ENCODE measurements at regions of chr14 and their contacts with region 1.

Region 1: GRCh38 chr14:22556990-22557623 is 31.9 kb downstream of the DAD1 start:
- DNase-seq: peak; percentile 89 to 95 (median 92)
- ATAC-seq: peak; percentile 85 to 87
- H3K4me3 ChIP-seq: peak overlapping the region; percentile 26
- H3K27ac ChIP-seq: no peak overlapping the region
- H3K4me1 ChIP-seq: peaks cover 2% of the 10 kb centered on the region
- H3K27me3 ChIP-seq: no peaks in the 10 kb centered on the region

Region 2: DNA sequence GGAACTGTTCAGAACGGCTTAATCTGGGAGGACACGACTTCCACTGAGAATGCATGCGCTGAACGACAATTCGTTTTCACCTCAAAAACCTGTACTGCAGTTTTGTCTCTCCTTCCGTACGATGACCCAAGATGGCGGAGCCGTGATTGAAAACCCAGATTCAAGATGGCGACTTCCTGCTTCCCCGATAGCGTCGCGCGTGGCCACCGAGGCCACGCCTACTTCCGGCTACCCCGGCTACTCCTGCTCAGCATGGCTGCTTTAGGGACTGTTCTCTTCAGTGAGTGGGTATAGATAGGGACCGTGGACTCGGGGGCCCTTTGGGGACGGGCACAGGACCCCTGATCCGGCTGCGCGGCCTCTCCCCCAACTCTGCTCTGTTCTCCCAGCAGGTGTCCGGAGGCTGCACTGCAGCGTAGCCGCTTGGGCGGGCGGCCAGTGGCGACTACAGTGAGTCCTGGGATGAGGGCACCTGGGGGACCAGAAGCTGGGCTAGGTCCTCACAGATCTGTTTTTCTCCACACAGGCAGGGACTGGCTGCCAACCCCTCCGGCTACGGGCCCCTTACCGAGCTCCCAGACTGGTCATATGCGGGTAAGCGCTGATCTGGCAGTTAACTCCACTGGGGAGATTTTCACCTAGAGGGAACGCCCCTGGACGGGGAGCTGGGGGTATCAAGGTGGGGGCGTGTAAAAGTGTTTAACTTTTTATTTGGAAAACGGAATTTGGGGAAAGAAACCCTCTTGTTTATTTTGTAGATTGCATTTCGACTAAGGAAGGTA is 272.7 kb after region 1 on chr14 and contains the start of gene MRPL52:
- intact Hi-C with region 1: loop called in 1 of 4 experiments (anchors 10 kb)
- DNase-seq: peak; percentile 92 to 96 (median 96)
- ATAC-seq: peak; percentile 96 to 97
- H3K4me3 ChIP-seq: peak within 1 kb of the TSS; percentile 74
- H3K27ac ChIP-seq: peak within 1 kb of the TSS; percentile 76
- H3K4me1 ChIP-seq: no peaks in the 10 kb centered on the region
- H3K27me3 ChIP-seq: no peaks in the 10 kb centered on the region
- total RNA-seq, gene MRPL52: 86.2 to 115 (median 91.1) TPM

Measured in right cardiac atrium (tissue), 5 donors.